Heart left ventricle (tissue), 16 donors: ENCODE measurements at regions of chr2 and their contacts with region 1.

Region 1: GRCh38 chr2:45280794-45281193 is 271.5 kb upstream of the SIX2 start:
- DNase-seq: no peak
- ATAC-seq: no peak
- H3K4me3 ChIP-seq: no peak overlapping the region
- H3K27ac ChIP-seq: no peak overlapping the region
- H3K4me1 ChIP-seq: peaks cover 0 to 5% (median 0%) of the 10 kb centered on the region in 12 donors
- H3K27me3 ChIP-seq: no peaks in the 10 kb centered on the region
- CTCF ChIP-seq: no peak
- POLR2A ChIP-seq: no peak

Region 2: GRCh38 chr2:45315861-45316260 is 35.1 kb after region 1 on chr2:
- intact Hi-C with region 1: loop called in 1 of 10 experiments (anchors 1 kb)
- DNase-seq: no peak
- ATAC-seq: peak in 1 of 4 donors; percentile 54
- H3K4me3 ChIP-seq: no peak overlapping the region
- H3K27ac ChIP-seq: no peak overlapping the region
- H3K4me1 ChIP-seq: no peaks in the 10 kb centered on the region
- H3K27me3 ChIP-seq: no peaks in the 10 kb centered on the region
- CTCF ChIP-seq: no peak
- POLR2A ChIP-seq: no peak

Region 3: DNA sequence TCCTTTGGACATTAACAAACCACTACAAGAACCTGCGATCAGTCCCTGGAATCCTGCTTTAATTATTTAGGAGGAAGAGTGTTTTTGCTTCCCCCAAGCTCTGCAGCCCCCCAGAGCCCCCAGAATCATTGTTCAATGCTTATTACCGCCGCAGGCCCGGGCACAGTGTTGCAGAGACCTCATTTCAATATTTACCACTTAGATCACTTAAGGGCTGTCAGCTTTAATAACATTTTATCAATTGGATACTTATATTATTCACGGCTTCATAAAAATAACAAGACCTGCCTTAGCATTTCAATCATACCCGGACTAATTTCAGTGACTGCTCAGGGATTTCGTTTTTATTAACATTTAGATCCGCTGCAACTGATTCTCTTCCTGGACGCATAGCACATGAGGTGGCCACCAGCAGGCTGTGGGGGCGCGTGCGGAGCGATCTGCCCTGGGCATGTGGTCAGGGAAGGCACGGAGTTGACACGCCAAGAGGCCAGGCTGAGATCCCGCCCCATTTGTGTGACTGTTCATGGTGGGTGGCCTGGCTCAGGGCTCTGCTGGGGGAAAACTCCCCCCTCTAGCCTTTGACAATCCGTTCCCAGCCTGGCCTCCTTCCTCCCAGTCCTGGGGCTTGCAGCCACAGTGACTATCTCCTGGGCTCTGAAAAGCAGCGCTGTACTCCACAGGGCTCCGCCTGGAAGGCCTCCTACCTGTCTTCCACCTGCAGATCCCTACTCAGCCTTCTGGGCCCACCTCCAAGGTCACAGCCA is 62.6 kb after region 1 on chr2:
- intact Hi-C with region 1: no loop called
- DNase-seq: no peak
- ATAC-seq: peak in 1 of 4 donors; percentile 22
- H3K4me3 ChIP-seq: no peak overlapping the region
- H3K27ac ChIP-seq: no peak overlapping the region
- H3K4me1 ChIP-seq: no peaks in the 10 kb centered on the region
- H3K27me3 ChIP-seq: peaks cover 0 to 14% (median 0%) of the 10 kb centered on the region in 9 donors
- CTCF ChIP-seq: no peak
- POLR2A ChIP-seq: no peak